ENCODE measurements at regions of chr11 and their contacts with region 1.

Region 1: DNA sequence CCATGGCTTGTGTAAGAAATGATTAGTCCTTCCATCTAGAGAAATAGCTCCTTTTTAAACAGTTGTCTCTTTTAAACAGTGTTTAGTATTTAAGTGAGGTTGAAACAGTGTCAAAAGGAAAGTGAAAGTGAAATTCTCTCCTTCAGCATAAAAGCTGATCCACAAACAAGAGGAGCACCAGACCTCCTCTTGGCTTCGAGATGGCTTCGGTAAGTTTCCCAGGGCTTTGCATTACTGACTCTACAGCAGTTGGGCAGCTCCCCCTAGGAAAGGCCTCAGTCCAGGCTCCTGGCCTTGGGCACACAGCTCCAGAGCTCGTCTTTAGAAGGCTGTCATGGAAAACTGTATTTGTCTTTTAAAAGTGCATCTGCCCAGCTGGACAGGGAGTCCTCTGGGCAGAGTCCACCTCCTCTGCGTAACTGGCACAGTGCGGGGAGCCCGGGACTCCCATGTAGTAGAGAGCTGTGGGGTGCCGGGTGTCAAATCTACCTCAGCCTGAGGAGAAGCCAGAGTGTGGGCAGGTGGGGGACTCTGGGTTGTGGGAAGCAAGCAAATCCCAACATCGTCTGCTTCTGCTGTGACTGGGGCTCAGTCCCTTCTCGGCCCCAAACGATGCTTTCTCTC is at the start of gene PLAAT4:
- DNase-seq: peak; percentile 48
- ATAC-seq: peak; percentile 71
- H3K4me3 Mint-ChIP-seq: peak within 1 kb of the TSS; percentile 84
- H3K27ac Mint-ChIP-seq: peak within 1 kb of the TSS; percentile 92
- H3K4me1 Mint-ChIP-seq: peaks cover 70% of the 10 kb centered on the region
- H3K27me3 Mint-ChIP-seq: no peaks in the 10 kb centered on the region
- total RNA-seq, gene PLAAT4: 97.5 to 99.8 TPM

Region 2: GRCh38 chr11:63547066-63547465 is 10.3 kb after region 1 on chr11:
- CTCF ChIA-PET with region 1: interaction called, 32 read pairs
- POLR2A ChIA-PET with region 1: interaction called, 106 read pairs
- DNase-seq: no peak
- ATAC-seq: no peak
- H3K4me3 Mint-ChIP-seq: no peak overlapping the region
- H3K27ac Mint-ChIP-seq: no peak overlapping the region
- H3K4me1 Mint-ChIP-seq: peaks cover 20% of the 10 kb centered on the region
- H3K27me3 Mint-ChIP-seq: no peaks in the 10 kb centered on the region

Region 3: GRCh38 chr11:63553741-63554151 is 17.0 kb after region 1 on chr11:
- CTCF ChIA-PET with region 1: interaction called, 32 read pairs
- POLR2A ChIA-PET with region 1: interaction called, 106 read pairs
- DNase-seq: peak; percentile 73
- ATAC-seq: peak; percentile 74
- H3K4me3 Mint-ChIP-seq: peak overlapping the region; percentile 75
- H3K27ac Mint-ChIP-seq: peak overlapping the region; percentile 100
- H3K4me1 Mint-ChIP-seq: peaks cover 59% of the 10 kb centered on the region
- H3K27me3 Mint-ChIP-seq: no peaks in the 10 kb centered on the region

Region 4: GRCh38 chr11:63567044-63567840 is 30.5 kb after region 1 on chr11:
- CTCF ChIA-PET with region 1: interaction called, 8 read pairs
- POLR2A ChIA-PET with region 1: interaction called, 27 read pairs
- DNase-seq: peak; percentile 66
- ATAC-seq: peak; percentile 81
- H3K4me3 Mint-ChIP-seq: peak overlapping the region; percentile 12
- H3K27ac Mint-ChIP-seq: peak overlapping the region; percentile 74
- H3K4me1 Mint-ChIP-seq: peaks cover 48% of the 10 kb centered on the region
- H3K27me3 Mint-ChIP-seq: peaks cover 2% of the 10 kb centered on the region

Region 5: GRCh38 chr11:63635762-63636465 is 99.1 kb after region 1 on chr11:
- CTCF ChIA-PET with region 1: interaction called, 13 read pairs
- POLR2A ChIA-PET with region 1: no interaction called
- DNase-seq: peak; percentile 74
- ATAC-seq: peak; percentile 79
- H3K4me3 Mint-ChIP-seq: no peak overlapping the region
- H3K27ac Mint-ChIP-seq: no peak overlapping the region
- H3K4me1 Mint-ChIP-seq: peaks cover 10% of the 10 kb centered on the region
- H3K27me3 Mint-ChIP-seq: no peaks in the 10 kb centered on the region

Measured in activated CD8-positive, alpha-beta T cell treated with anti-CD3 and anti-CD28 coated beads, Interleukin-2, amount 10 ng/mL, durations not matched to agents 7 days and 5 days (primary cell).